Left ventricle myocardium superior (tissue), 1 donor: ENCODE measurements at regions of chr2 and their contacts with region 1.

Region 1: GRCh38 chr2:10408649-10409579 is 39.2 kb downstream of the ODC1 start:
- DNase-seq: peak; percentile 83
- ATAC-seq: peak; percentile 65

Region 2: GRCh38 chr2:10009811-10010292 is 399.1 kb before region 1 on chr2:
- intact Hi-C with region 1: no loop called
- DNase-seq: peak; percentile 96
- ATAC-seq: peak; percentile 83

Region 3: GRCh38 chr2:10144771-10145518 is 264.0 kb before region 1 on chr2:
- intact Hi-C with region 1: loop called (anchors 5 kb)
- DNase-seq: no peak
- ATAC-seq: peak; percentile 55

Region 4: GRCh38 chr2:10329880-10330699 is 78.8 kb before region 1 on chr2:
- intact Hi-C with region 1: loop called (anchors 10 kb)
- DNase-seq: no peak
- ATAC-seq: no peak

Region 5: DNA sequence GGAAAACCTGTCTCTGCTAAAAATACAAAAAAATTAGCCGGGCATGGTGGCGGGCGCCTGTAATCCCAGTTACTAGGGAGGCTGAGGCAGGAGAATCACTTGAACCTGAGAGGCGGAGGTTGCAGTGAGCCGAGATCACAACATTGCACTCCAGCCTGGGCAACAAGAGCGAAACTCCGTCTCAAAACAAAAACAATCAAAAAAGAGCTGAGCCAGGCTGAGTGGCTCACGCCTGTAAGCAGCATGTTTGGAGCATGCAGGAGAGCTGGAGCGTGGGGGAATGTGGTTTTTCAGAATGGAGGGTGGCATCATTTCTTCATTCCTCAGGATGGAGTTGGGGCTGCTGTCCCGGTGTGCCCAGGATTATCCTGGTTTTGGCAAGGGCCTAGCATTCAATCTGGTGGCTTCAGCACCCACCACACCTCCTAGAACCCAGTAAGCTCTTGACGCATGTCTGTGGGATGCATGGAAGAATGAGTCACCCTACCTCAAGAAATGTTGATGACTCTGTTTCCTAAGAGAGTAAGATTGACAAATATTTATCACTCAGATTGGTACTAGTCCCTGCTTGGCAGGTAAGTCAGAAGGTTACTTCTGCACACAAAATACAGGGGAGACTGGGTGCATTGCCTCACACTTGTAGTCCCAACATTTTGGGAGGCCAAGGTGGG is 129.4 kb after region 1 on chr2:
- intact Hi-C with region 1: no loop called
- DNase-seq: no peak
- ATAC-seq: no peak